K562 (cell line): ENCODE measurements at regions of chr7 and their contacts with region 1.

Region 1: GRCh38 chr7:116862234-116862950 is at the start of gene CAPZA2:
- DNase-seq: peak; percentile 98 to 100 (median 100)
- ATAC-seq: peak; percentile 88
- H3K4me3 ChIP-seq: peak within 1 kb of the TSS; percentile 64
- H3K27ac ChIP-seq: peak within 1 kb of the TSS; percentile 87
- H3K4me1 ChIP-seq: peaks cover 6 to 20% of the 10 kb centered on the region in 2 experiments
- H3K27me3 ChIP-seq: no peaks in the 10 kb centered on the region; a peak in 1 of 5 replicates
- CTCF ChIP-seq: peak in 2 of 3 experiments; percentile 32 to 46; a peak in 3 of 6 replicates
- EP300 ChIP-seq: peak; percentile 19; the same call in 1 of the 2 replicates
- POLR2A ChIP-seq: peak; percentile 95
- RAD21 ChIP-seq: no peak
- polyA plus RNA-seq, gene CAPZA2: 352 to 524 TPM

Region 2: GRCh38 chr7:116762971-116763370 is 99.4 kb before region 1 on chr7:
- CTCF ChIA-PET with region 1: no interaction called
- POLR2A ChIA-PET with region 1: no interaction called
- in situ Hi-C with region 1: no loop called
- intact Hi-C with region 1: no loop called
- DNase-seq: no peak
- ATAC-seq: no peak
- H3K4me3 ChIP-seq: no peak overlapping the region
- H3K27ac ChIP-seq: no peak overlapping the region
- H3K4me1 ChIP-seq: no peaks in the 10 kb centered on the region
- H3K27me3 ChIP-seq: no peaks in the 10 kb centered on the region
- CTCF ChIP-seq: no peak
- EP300 ChIP-seq: no peak
- POLR2A ChIP-seq: no peak
- RAD21 ChIP-seq: no peak

Region 3: GRCh38 chr7:116876664-116877442 is 14.5 kb after region 1 on chr7:
- CTCF ChIA-PET with region 1: no interaction called
- POLR2A ChIA-PET with region 1: interaction called, 10 read pairs
- in situ Hi-C with region 1: no loop called
- intact Hi-C with region 1: loop called (anchors 1 kb)
- DNase-seq: peak; percentile 88 to 99 (median 92)
- ATAC-seq: peak; percentile 99
- H3K4me3 ChIP-seq: no peak overlapping the region; the same call in 1 of the 2 replicates
- H3K27ac ChIP-seq: peak overlapping the region; percentile 64
- H3K4me1 ChIP-seq: peaks cover 14 to 34% of the 10 kb centered on the region in 2 experiments
- H3K27me3 ChIP-seq: no peaks in the 10 kb centered on the region
- CTCF ChIP-seq: peak; percentile 68 to 83 (median 80)
- EP300 ChIP-seq: peak; percentile 100
- POLR2A ChIP-seq: no peak
- RAD21 ChIP-seq: peak; percentile 42 to 70; a peak in 3 of 4 replicates